Heart left ventricle (tissue), 16 donors: ENCODE measurements at regions of chr6 and their contacts with region 1.

Region 1: DNA sequence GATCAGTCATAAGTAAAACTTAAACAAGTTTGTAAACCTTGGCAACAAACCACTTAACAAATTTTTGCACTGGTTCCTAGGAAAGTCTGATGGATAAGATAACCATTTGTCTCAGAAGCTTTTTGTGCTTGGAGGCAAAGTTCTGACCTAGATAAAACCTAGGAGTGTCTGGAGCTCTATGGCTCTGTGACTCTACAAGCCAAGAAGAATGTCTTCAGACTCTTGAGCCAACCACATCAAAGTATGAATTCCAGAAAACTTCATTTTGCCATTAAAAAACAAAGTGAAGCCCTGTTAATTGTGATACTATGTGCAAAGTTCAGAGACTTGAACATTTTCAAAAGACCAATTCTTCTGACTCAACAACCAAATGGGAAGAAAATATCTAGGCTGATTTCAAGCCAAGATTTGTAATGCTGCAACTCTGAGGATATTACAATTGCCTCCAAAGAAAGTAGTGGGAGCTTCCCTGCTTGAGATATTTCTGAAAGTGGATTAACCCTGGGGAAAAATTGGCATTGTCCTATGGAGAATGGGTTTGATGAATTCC is 158.1 kb upstream of the FOXQ1 start:
- DNase-seq: no peak
- ATAC-seq: no peak
- H3K4me3 ChIP-seq: no peak overlapping the region
- H3K27ac ChIP-seq: no peak overlapping the region
- H3K4me1 ChIP-seq: no peaks in the 10 kb centered on the region
- H3K27me3 ChIP-seq: peaks cover 0 to 16% (median 0%) of the 10 kb centered on the region in 9 donors
- CTCF ChIP-seq: no peak
- POLR2A ChIP-seq: no peak

Region 2: DNA sequence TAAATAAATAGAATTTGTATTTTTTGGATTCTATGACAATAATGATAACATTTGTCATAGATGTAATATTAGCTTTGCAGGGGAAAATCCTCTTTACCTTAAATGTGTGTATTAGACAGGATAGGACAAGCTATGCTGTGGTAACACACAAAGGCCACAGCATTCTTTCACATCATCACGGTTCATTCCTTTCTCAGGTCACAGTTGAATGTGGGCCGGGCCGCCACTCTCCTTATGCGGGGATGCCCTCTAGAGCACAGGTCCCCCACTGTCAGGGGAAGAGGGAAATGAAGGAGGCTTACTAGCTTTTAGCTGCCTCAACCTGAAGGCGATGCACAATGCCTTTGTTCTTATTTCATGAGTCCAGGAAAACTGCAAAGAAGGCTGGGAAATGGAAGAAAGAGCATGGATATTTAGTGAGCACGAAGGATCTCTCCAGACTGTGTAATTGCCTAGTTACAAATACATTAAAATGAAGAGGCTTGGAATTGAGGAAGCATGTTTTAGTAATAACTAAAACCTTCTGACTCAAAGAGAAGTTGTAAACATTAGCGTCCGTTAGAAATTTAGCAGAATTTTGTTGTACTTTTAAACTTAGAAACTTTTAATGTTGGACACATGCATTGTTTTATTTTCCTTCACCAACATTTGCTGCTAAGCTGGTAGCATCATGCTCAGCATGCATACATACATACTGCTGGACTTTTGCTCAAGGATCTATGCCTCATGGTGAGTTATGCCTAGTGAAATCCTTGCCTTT is 90.8 kb before region 1 on chr6:
- intact Hi-C with region 1: no loop called
- DNase-seq: no peak
- ATAC-seq: no peak
- H3K4me3 ChIP-seq: no peak overlapping the region
- H3K27ac ChIP-seq: no peak overlapping the region
- H3K4me1 ChIP-seq: no peaks in the 10 kb centered on the region
- H3K27me3 ChIP-seq: peaks cover 0 to 6% (median 0%) of the 10 kb centered on the region in 9 donors
- CTCF ChIP-seq: no peak
- POLR2A ChIP-seq: no peak

Region 3: GRCh38 chr6:1110164-1110563 is 43.6 kb before region 1 on chr6:
- intact Hi-C with region 1: no loop called
- DNase-seq: no peak
- ATAC-seq: no peak
- H3K4me3 ChIP-seq: no peak overlapping the region
- H3K27ac ChIP-seq: no peak overlapping the region
- H3K4me1 ChIP-seq: no peaks in the 10 kb centered on the region
- H3K27me3 ChIP-seq: peaks cover 0 to 9% (median 0%) of the 10 kb centered on the region in 9 donors
- CTCF ChIP-seq: no peak
- POLR2A ChIP-seq: no peak

Region 4: GRCh38 chr6:1131285-1132079 is 22.3 kb before region 1 on chr6:
- intact Hi-C with region 1: loop called in 1 of 10 experiments (anchors 2 kb)
- DNase-seq: peak in 4 of 5 donors; percentile 31 to 56 (median 33)
- ATAC-seq: peak in 2 of 4 donors; percentile 55 to 56
- H3K4me3 ChIP-seq: no peak overlapping the region
- H3K27ac ChIP-seq: peak overlapping the region in 7 of 12 donors; percentile 19 to 62 (median 44)
- H3K4me1 ChIP-seq: peaks cover 0 to 21% (median 0%) of the 10 kb centered on the region in 12 donors
- H3K27me3 ChIP-seq: no peaks in the 10 kb centered on the region
- CTCF ChIP-seq: no peak
- POLR2A ChIP-seq: no peak

Region 5: DNA sequence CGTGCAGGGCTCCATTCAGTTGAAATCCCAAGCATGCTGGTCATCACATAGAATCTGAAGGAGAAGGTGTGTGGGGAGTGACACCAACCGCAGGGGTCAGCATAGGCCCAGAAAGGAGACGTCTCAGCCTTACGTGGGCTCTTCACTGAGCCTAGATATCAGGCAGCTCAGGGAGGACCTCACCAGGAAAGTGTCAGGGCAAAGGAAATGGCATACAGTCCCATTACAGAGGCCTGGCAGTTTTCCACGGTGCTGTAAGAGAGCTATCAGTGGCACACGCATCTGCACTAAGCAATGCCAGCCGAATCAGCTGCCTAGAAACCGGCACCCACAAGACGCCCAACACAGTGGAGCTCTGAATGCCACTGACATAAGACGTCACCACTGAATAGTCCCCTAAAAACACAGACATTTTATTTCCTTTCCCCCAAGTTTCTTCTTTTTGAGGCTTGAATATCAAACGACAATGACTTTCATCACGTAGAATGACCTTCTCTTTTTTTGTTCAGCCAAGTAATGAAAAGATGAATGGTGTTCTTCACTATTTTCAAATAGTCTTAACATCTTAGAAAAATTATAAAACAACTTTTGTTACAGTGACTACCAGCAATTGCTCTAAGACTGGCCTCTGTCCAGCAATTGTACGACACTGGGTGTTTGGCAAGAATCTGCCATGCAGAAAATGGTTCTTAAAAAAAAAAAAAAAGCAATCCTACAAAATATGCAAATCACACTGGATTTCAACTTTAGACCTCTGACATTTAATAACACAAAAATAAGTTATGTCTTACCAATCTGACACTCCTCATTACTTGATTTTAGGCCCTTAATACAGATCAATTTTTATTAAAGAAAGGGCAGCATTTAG is 69.2 kb after region 1 on chr6:
- intact Hi-C with region 1: no loop called
- DNase-seq: peak in 4 of 5 donors; percentile 49 to 77 (median 66)
- ATAC-seq: peak; percentile 88 to 97 (median 94)
- H3K4me3 ChIP-seq: no peak overlapping the region
- H3K27ac ChIP-seq: no peak overlapping the region
- H3K4me1 ChIP-seq: no peaks in the 10 kb centered on the region
- H3K27me3 ChIP-seq: peaks cover 0 to 4% (median 0%) of the 10 kb centered on the region in 9 donors
- CTCF ChIP-seq: no peak
- POLR2A ChIP-seq: no peak